GM18951 (cell line): ENCODE measurements at regions of chr4 and their contacts with region 1.

Region 1: DNA sequence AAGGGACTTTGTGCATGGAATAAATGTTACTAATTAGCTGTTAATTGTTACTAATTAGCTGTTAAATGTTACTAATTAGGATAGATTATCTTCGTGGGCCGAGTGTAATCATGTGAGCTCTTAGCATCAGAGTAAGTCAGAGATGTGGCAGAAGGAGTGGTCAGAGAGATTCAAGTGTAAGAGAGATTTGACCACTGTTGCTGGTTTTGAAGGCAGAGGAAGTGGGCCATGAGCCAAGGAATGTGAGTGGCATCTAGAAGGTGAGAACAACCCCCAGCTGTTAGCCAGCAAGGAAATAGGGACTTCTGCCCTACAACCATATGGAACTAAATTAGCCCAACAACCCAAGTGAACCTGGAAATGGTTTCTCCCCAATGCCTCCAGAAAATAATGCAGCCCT is 28.2 kb downstream of the ODAPH start:
- POLR2A ChIP-seq: no peak

Region 2: DNA sequence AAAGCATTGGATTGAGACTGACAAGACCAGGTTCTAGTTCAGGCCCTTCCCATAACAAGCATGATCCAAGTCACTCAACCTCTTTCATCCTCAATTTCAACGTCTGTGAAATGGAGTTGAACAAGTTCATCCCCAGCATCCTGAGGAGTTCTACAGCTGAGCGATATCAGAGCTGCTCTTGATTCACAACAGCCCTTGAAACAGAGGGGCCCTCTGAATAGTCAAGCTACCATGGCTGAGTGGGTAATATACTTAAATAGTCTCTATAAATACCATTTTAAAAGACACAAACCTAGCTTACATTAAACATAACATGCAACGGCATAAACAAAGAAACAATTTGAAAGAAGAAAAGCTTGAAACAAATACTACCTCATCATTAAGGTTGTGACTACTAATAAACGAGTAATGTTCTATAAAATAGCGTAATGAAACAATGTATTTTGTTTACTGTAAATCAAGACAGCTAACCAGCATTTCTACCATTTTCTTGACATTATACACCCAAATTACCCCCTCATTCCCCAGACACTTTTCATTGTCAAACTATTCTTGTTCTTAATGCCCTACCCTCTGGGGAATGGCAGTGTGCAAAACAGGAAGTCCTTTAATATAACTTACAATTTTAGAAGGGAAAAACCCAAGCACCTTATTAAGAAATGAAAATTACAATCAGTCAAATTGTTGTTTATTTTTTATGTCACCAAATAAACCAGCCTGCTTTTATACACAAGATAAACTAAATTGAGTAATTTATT is 448.8 kb before region 1 on chr4:
- in situ Hi-C with region 1: no loop called
- POLR2A ChIP-seq: no peak

Region 3: DNA sequence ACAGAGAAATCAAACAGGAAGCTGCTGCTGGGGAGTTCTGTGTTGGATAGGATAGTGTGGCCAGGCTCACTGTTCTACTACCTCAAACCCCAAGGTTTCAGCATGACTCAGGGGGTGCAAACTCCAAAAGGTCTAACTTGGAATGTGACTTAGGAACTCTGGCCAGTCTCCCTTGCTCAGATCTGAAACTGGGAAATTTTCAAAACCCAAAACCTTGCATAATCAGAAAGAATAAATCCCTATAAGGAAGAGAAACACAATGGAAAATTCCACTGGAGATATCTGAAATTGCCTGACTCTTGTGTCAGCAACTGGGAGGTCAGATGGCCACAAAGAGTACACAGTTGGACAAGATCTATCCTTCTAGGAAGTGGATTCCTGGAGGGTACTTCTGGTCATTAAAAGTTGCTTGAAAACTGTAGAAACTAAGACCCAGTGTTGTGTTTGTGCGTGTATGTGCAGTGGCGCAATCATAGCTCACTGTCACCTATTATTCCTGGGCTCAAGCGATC is 260.1 kb after region 1 on chr4:
- in situ Hi-C with region 1: loop called (anchors 5 kb)
- POLR2A ChIP-seq: no peak